Activated CD4-positive, alpha-beta memory T cell treated with anti-CD3 and anti-CD28 coated beads for 36 hours (primary cell): ENCODE measurements at regions of chr20 and their contacts with region 1.

Region 1: DNA sequence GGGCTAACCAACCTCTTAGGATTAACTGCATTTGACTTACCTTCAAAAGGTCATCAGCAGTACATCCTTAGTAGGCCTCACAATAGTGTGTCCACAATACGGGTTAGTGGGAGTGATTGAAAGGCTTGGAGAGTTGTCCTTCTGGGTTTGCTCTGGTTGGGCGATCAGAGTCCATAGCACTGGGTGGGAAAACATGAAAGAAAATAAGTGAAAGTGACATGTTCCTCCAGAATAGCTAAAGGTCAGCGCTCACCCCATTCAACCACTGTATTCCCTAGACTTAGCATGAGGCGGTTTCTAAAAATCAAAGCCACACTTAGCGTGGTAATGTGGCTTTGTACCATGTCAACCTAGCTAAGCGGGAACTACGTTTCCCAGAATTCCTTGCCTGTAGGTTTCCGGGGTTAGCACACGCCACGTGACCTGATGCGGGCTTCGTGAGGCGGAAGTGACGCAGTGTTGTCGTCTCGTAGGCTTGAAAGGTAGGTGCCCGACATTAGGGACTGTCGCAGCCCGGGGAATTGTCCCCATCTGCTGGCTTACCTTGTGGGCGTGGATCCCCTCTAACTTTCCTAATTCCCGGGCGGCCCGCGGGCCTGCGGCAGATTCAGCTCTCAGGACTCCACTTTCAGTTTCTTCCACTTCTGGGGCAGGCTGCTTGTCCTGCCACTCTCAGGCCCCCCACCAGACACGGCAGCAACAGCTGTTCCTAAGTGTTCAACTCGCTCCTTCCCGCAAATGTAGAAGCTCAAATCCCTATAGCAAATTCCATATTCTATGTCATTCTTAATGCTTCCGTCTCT is 19.8 kb upstream of the SCP2D1 start:
- DNase-seq: peak; percentile 91
- H3K4me3 Mint-ChIP-seq: peak overlapping the region; percentile 90
- H3K27ac Mint-ChIP-seq: peak overlapping the region; percentile 86
- H3K4me1 Mint-ChIP-seq: peaks cover 12% of the 10 kb centered on the region
- H3K27me3 Mint-ChIP-seq: peaks cover 7% of the 10 kb centered on the region

Region 2: DNA sequence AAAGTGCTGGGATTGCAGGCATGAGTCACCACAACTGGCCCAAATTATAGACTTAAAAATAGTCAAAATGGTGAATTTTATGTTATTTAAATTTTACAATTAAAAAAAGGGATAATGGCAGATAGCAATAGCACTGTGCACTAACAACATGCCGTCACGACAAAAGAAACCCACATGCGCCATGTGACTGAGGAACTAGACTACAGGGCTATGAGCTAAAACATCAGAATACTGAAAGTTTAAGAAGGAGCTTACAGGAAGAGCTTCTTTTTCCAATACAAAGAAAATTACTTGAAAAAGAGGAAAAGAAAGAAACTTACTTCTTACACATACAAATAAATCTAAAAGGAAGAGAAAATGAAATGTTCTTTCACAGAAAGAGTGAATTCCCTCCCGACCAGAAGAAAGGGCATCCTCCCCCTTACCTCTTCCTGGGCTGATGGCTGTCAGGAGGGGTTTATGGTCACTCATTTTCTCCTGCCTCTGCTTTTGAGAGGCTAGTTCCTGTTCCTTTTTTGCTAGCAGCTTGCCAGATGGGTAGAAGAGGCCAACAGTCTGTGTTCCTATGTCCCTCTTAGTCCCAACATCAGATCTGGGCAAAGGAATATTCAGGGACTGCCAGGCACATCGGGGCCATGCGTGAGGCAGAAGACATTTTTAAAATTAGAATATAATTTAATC is 381.5 kb before region 1 on chr20:
- CTCF ChIA-PET with region 1: no interaction called
- POLR2A ChIA-PET with region 1: no interaction called
- intact Hi-C with region 1: loop called (anchors 5 kb)
- DNase-seq: no peak
- H3K4me3 Mint-ChIP-seq: no peak overlapping the region
- H3K27ac Mint-ChIP-seq: no peak overlapping the region
- H3K4me1 Mint-ChIP-seq: peaks cover 3% of the 10 kb centered on the region
- H3K27me3 Mint-ChIP-seq: no peaks in the 10 kb centered on the region